GM12878 (cell line): ENCODE measurements at regions of chr14 and their contacts with region 1.

Region 1: GRCh38 chr14:58637391-58638230 is at the start of gene DACT1:
- DNase-seq: no peak
- ATAC-seq: peak; percentile 63
- H3K4me3 ChIP-seq: peak within 1 kb of the TSS; percentile 56; the same call in 1 of the 2 replicates
- H3K27ac ChIP-seq: no peak within 1 kb of the TSS
- H3K4me1 ChIP-seq: peaks cover 9% of the 10 kb centered on the region
- H3K27me3 ChIP-seq: peaks cover 0 to 8% of the 10 kb centered on the region in 2 experiments; a peak in 2 of 4 replicates
- CTCF ChIP-seq: no peak
- EP300 ChIP-seq: no peak
- POLR2A ChIP-seq: peak; percentile 49; the same call in 1 of the 2 replicates
- RAD21 ChIP-seq: no peak
- polyA plus RNA-seq, gene DACT1: 0.16 to 0.27 TPM

Region 2: DNA sequence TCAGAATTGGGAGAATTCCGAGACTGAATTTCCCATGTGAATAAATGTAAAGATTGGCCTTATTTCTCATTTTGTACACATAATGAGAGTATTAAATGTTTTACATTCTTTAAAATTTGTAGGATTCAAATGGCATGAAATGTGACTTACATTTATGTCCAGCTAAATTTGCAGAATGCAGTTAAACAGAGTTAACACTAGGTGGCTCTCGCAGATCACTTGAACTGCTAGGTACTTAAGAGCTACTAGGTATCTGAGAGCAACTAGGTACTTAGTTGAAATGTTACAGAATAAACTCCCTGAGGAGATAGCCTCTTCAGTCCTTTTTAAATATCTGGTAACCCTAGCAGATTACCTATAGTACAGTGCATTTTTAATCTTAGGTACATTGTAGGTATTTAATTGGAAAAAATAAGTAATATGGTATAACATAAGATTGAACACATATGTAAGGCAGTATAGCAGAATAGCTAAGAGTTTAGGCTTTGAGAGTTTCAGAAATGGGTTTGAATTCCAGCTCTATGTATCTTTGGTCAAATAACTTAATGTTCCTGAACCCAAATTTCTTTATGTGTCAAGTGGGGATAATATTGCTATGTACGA is 136.3 kb before region 1 on chr14:
- CTCF ChIA-PET with region 1: interaction called, 95 read pairs
- POLR2A ChIA-PET with region 1: interaction called, 3 read pairs
- RAD21 ChIA-PET with region 1: interaction called, 71 read pairs
- SMC1A ChIA-PET with region 1: interaction called, 29 read pairs
- in situ Hi-C with region 1: no loop called
- intact Hi-C with region 1: loop called (anchors 1 kb)
- DNase-seq: peak; percentile 30
- ATAC-seq: peak; percentile 91
- H3K4me3 ChIP-seq: no peak overlapping the region
- H3K27ac ChIP-seq: no peak overlapping the region
- H3K4me1 ChIP-seq: no peaks in the 10 kb centered on the region
- H3K27me3 ChIP-seq: no peaks in the 10 kb centered on the region
- CTCF ChIP-seq: peak; percentile 72 to 89 (median 75)
- EP300 ChIP-seq: no peak
- POLR2A ChIP-seq: no peak
- RAD21 ChIP-seq: peak; percentile 96

Region 3: GRCh38 chr14:58584383-58584782 is 53.2 kb before region 1 on chr14:
- CTCF ChIA-PET with region 1: no interaction called
- POLR2A ChIA-PET with region 1: no interaction called
- RAD21 ChIA-PET with region 1: no interaction called
- SMC1A ChIA-PET with region 1: no interaction called
- in situ Hi-C with region 1: no loop called
- intact Hi-C with region 1: no loop called
- DNase-seq: no peak
- ATAC-seq: no peak
- H3K4me3 ChIP-seq: no peak overlapping the region
- H3K27ac ChIP-seq: no peak overlapping the region
- H3K4me1 ChIP-seq: no peaks in the 10 kb centered on the region
- H3K27me3 ChIP-seq: no peaks in the 10 kb centered on the region
- CTCF ChIP-seq: no peak
- EP300 ChIP-seq: no peak
- POLR2A ChIP-seq: no peak
- RAD21 ChIP-seq: no peak

Region 4: DNA sequence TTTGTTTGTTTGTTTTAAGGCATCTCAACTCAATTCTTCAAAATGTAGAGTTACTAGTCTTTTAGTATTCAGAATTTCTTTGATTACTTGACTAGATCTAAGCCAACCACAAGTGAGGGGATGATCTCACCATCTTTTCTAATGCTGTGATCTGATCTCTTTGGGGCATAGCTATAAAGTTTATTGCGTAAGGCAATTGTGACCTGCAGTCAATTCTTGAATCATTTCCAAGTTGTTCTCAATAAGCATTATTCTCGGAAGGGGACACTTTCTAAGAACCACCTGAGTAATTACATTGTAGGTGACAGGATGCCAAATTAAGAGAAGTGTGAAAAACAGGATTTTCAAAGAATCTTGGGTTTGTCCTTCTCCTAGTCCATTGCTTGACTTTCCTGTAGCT is 13.2 kb after region 1 on chr14:
- CTCF ChIA-PET with region 1: interaction called, 5 read pairs
- POLR2A ChIA-PET with region 1: no interaction called
- RAD21 ChIA-PET with region 1: interaction called, 5 read pairs
- SMC1A ChIA-PET with region 1: interaction called, 13 read pairs
- in situ Hi-C with region 1: no loop called
- intact Hi-C with region 1: no loop called
- DNase-seq: no peak
- ATAC-seq: no peak
- H3K4me3 ChIP-seq: no peak overlapping the region
- H3K27ac ChIP-seq: no peak overlapping the region
- H3K4me1 ChIP-seq: no peaks in the 10 kb centered on the region
- H3K27me3 ChIP-seq: no peaks in the 10 kb centered on the region
- CTCF ChIP-seq: no peak
- EP300 ChIP-seq: no peak
- POLR2A ChIP-seq: no peak
- RAD21 ChIP-seq: no peak

Region 5: GRCh38 chr14:58749066-58749669 is 111.6 kb after region 1 on chr14:
- CTCF ChIA-PET with region 1: interaction called, 5 read pairs
- POLR2A ChIA-PET with region 1: interaction called, 3 read pairs
- RAD21 ChIA-PET with region 1: interaction called, 4 read pairs
- SMC1A ChIA-PET with region 1: interaction called, 5 read pairs
- in situ Hi-C with region 1: no loop called
- intact Hi-C with region 1: loop called (anchors 2 kb)
- DNase-seq: peak; percentile 86
- ATAC-seq: peak; percentile 95
- H3K4me3 ChIP-seq: no peak overlapping the region
- H3K27ac ChIP-seq: no peak overlapping the region
- H3K4me1 ChIP-seq: no peaks in the 10 kb centered on the region
- H3K27me3 ChIP-seq: no peaks in the 10 kb centered on the region
- CTCF ChIP-seq: no peak
- EP300 ChIP-seq: peak; percentile 91 to 93
- POLR2A ChIP-seq: no peak
- RAD21 ChIP-seq: no peak

Region 6: GRCh38 chr14:58947814-58948445 is 310.3 kb after region 1 on chr14:
- CTCF ChIA-PET with region 1: interaction called, 3 read pairs
- POLR2A ChIA-PET with region 1: no interaction called
- RAD21 ChIA-PET with region 1: interaction called, 3 read pairs
- SMC1A ChIA-PET with region 1: interaction called, 22 read pairs
- in situ Hi-C with region 1: no loop called
- intact Hi-C with region 1: no loop called
- DNase-seq: no peak
- ATAC-seq: no peak
- H3K4me3 ChIP-seq: no peak overlapping the region
- H3K27ac ChIP-seq: no peak overlapping the region
- H3K4me1 ChIP-seq: no peaks in the 10 kb centered on the region
- H3K27me3 ChIP-seq: no peaks in the 10 kb centered on the region
- CTCF ChIP-seq: no peak
- EP300 ChIP-seq: no peak
- POLR2A ChIP-seq: no peak
- RAD21 ChIP-seq: no peak

Region 7: GRCh38 chr14:59004012-59004411 is 366.4 kb after region 1 on chr14:
- CTCF ChIA-PET with region 1: interaction called, 14 read pairs
- POLR2A ChIA-PET with region 1: no interaction called
- RAD21 ChIA-PET with region 1: interaction called, 3 read pairs
- SMC1A ChIA-PET with region 1: interaction called, 17 read pairs
- in situ Hi-C with region 1: no loop called
- intact Hi-C with region 1: no loop called
- DNase-seq: no peak
- ATAC-seq: no peak
- H3K4me3 ChIP-seq: no peak overlapping the region
- H3K27ac ChIP-seq: no peak overlapping the region
- H3K4me1 ChIP-seq: no peaks in the 10 kb centered on the region
- H3K27me3 ChIP-seq: no peaks in the 10 kb centered on the region
- CTCF ChIP-seq: no peak
- EP300 ChIP-seq: no peak
- POLR2A ChIP-seq: no peak
- RAD21 ChIP-seq: peak; percentile 39; the same call in 1 of the 2 replicates

Region 8: GRCh38 chr14:59055439-59056045 is 417.9 kb after region 1 on chr14:
- CTCF ChIA-PET with region 1: interaction called, 43 read pairs
- POLR2A ChIA-PET with region 1: no interaction called
- RAD21 ChIA-PET with region 1: interaction called, 28 read pairs
- SMC1A ChIA-PET with region 1: interaction called, 35 read pairs
- in situ Hi-C with region 1: no loop called
- intact Hi-C with region 1: loop called (anchors 1 kb)
- DNase-seq: peak; percentile 7
- ATAC-seq: peak; percentile 97
- H3K4me3 ChIP-seq: no peak overlapping the region
- H3K27ac ChIP-seq: no peak overlapping the region
- H3K4me1 ChIP-seq: no peaks in the 10 kb centered on the region
- H3K27me3 ChIP-seq: no peaks in the 10 kb centered on the region
- CTCF ChIP-seq: peak; percentile 67 to 85 (median 74)
- EP300 ChIP-seq: no peak
- POLR2A ChIP-seq: no peak
- RAD21 ChIP-seq: peak; percentile 90